ENCODE measurements at regions of chr13 and their contacts with region 1.

Region 1: DNA sequence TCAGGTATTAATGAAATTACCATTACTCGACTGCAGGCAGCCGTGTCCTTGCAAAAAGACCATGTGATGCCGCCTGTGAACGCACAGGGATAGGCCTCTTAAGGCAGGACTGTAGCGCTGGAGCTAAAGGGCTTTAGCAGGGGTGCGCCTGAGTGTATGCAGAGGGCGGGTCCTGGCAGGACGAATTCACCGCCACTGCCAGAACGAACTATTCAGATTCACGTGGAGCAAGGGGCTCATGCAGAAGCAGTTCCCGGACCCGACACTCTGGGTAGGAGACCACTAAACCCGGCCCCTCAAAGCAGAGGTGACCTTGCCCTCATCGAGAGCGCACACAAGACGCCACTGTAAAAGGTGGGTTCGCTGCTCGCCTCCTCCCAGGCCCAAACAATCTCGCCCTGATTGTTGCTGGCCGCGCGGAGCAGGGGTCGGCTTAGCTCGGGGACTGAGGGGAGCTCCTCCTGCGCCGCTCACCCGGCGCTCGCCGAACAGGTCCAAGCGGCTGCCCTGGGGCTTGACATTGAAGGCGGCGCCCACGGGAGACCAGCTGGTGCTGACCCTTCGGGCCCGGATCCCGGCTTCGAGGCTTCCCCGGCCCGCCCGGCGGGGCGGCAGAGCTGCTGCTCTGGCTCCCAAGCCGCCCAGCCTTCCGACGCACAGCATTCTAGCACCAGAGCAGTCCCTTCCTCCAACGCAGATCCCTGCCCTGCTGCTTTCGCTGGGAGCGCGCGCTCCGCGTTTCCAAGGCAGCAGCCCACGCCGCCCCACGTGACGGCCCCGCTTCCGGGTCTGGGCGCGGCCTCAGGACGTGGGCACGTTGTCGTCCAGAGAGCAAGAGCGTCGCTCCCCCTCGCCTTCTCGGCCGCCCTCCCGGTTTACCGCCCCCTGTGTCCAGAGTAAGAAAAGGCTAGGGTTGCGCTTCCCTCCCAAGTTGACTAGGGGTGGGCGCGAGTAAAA is at the start of gene MIPEP:
- DNase-seq: peak; percentile 97
- H3K4me3 ChIP-seq: peak within 1 kb of the TSS; percentile 61 to 69 (median 61)
- H3K27ac ChIP-seq: peak within 1 kb of the TSS; percentile 50
- H3K4me1 ChIP-seq: peaks cover 10% of the 10 kb centered on the region
- H3K27me3 ChIP-seq: no peaks in the 10 kb centered on the region
- CTCF ChIP-seq: peak; percentile 78 to 84
- POLR2A ChIP-seq: no peak
- total RNA-seq, gene MIPEP: 16.2 and 19.2 TPM in 2 replicates

Region 2: DNA sequence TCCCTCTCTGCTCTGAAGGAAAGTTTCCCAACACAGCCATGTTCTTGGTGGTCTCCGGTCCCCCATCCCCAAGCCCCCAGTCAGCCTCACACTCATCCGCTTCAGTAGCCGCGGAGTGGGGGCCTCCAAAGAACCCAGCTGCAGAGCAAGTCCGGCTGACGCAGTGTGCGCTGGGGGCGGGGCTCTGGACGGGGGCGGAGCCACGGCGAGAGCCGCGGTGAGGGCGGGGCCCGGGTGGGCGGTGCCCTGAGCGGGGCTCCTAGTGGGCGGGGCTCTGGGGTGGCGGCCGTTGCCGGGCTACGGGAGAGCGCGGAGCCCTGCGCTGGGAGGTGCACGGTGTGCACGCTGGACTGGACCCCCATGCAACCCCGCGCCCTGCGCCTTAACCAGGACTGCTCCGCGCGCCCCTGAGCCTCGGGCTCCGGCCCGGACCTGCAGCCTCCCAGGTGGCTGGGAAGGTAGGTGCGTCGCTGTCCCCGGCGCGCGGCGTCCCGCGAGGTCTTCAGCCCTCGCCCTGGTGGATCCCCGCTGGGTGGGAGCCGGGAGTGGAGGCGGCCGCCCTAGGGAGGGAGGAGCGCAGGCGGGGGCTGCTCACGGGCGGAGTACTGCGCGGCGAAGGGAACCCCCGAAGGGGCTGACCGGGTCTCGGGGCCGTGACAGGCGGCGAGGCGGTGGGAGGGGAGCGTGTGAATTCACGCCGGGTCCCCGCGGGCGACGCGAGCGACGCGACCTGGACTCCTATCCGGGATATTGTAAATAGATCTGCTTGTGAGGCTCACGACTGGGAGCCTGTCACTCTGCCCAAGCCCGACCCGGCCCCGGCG is 309.7 kb before region 1 on chr13:
- CTCF ChIA-PET with region 1: no interaction called
- POLR2A ChIA-PET with region 1: no interaction called
- dilution Hi-C with region 1: no loop called
- intact Hi-C with region 1: loop called (anchors 5 kb)
- DNase-seq: peak; percentile 81
- H3K4me3 ChIP-seq: peak overlapping the region; percentile 16 to 64 (median 53)
- H3K27ac ChIP-seq: no peak overlapping the region
- H3K4me1 ChIP-seq: peaks cover 13% of the 10 kb centered on the region
- H3K27me3 ChIP-seq: peaks cover 27 to 41% of the 10 kb centered on the region in 2 experiments
- CTCF ChIP-seq: no peak
- POLR2A ChIP-seq: no peak

Region 3: DNA sequence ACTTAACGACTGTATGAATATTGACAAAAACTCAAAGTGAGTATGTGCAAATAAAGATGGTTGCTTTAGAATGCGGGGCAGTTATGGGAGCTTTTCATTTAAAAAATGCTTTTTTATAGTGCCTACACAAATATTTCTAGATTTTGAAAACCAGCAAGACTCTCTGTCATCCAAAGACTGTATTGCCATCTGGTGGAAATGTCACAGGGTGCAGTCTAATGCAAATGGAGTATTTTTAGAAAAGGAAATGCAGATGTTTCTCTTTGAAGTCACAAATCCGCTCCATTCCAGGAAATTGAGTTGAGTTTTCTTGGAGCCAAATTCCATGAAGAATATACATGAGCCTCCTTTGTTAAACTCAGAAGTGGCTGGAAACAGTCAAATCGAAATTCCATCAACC is 10.6 kb after region 1 on chr13:
- CTCF ChIA-PET with region 1: interaction called, 16 read pairs
- POLR2A ChIA-PET with region 1: no interaction called
- dilution Hi-C with region 1: no loop called
- intact Hi-C with region 1: no loop called
- DNase-seq: peak; percentile 50
- H3K4me3 ChIP-seq: no peak overlapping the region
- H3K27ac ChIP-seq: no peak overlapping the region
- H3K4me1 ChIP-seq: peaks cover 20% of the 10 kb centered on the region
- H3K27me3 ChIP-seq: no peaks in the 10 kb centered on the region
- CTCF ChIP-seq: peak; percentile 23 to 46
- POLR2A ChIP-seq: no peak